IMR-90 (cell line): ENCODE measurements at regions of chr19 and their contacts with region 1.

Region 1: DNA sequence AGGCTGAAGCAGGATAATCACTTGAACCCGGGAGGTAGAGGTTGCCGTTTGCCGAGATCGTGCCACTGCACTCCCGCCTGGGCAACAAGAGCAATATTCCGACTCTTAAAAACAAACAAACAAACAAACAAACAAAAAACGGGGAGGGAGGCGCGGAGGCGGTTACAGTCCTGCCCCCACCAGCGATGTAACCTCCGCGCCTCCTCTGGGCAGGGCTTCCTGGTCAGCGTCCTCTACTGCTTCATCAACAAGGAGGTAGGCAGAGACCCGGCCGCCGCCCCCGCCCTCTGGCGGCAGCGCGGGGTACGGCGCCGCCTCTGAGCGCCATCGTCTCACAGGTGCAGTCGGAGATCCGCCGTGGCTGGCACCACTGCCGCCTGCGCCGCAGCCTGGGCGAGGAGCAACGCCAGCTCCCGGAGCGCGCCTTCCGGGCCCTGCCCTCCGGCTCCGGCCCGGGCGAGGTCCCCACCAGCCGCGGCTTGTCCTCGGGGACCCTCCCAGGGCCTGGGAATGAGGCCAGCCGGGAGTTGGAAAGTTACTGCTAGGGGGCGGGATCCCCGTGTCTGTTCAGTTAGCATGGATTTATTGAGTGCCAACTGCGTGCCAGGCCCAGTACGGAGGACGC is 10.2 kb downstream of the SNRPD2 start:
- DNase-seq: peak; percentile 69
- ATAC-seq: peak; percentile 95
- H3K4me3 ChIP-seq: peak overlapping the region; percentile 37
- H3K27ac ChIP-seq: no peak overlapping the region
- H3K4me1 ChIP-seq: peaks cover 6% of the 10 kb centered on the region; the same call in 1 of the 2 replicates
- H3K27me3 ChIP-seq: peaks cover 11% of the 10 kb centered on the region
- CTCF ChIP-seq: peak; percentile 91
- POLR2A ChIP-seq: no peak
- RAD21 ChIP-seq: peak; percentile 75

Region 2: GRCh38 chr19:45607071-45608029 is 74.2 kb before region 1 on chr19:
- CTCF ChIA-PET with region 1: no interaction called
- POLR2A ChIA-PET with region 1: no interaction called
- dilution Hi-C with region 1: no loop called
- in situ Hi-C with region 1: no loop called
- intact Hi-C with region 1: loop called (anchors 1 kb)
- DNase-seq: peak; percentile 59
- ATAC-seq: peak; percentile 96
- H3K4me3 ChIP-seq: no peak overlapping the region
- H3K27ac ChIP-seq: no peak overlapping the region
- H3K4me1 ChIP-seq: peaks cover 6% of the 10 kb centered on the region; the same call in 1 of the 2 replicates
- H3K27me3 ChIP-seq: peaks cover 6% of the 10 kb centered on the region
- CTCF ChIP-seq: peak; percentile 94
- POLR2A ChIP-seq: no peak
- RAD21 ChIP-seq: peak; percentile 81